Panc1 (cell line): ENCODE measurements at regions of chr10 and their contacts with region 1.

Region 1: GRCh38 chr10:102045292-102045691 is 10.7 kb downstream of the ARMH3 start:
- DNase-seq: no peak
- ATAC-seq: no peak
- H3K4me3 ChIP-seq: no peak overlapping the region
- H3K27ac ChIP-seq: no peak overlapping the region
- H3K4me1 ChIP-seq: no peaks in the 10 kb centered on the region
- H3K27me3 ChIP-seq: no peaks in the 10 kb centered on the region
- CTCF ChIP-seq: no peak

Region 2: DNA sequence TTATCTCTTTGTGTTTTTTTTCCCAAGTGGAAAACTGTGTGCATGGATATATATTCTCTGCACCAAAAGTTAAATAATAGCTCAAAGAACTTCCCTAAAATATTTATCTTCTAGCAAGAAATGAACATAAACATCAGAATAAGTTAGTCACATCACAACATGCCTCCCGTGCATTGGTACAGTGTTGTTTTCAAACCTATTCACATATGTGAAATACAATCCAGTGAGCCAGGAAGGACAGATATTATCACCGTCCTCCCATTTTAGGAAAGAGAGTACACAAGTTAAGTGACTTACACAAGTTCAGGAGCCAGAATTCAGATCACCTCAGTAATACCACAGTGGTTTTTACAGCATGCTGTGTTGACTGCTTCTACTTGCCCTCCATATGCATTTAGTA is 11.5 kb before region 1 on chr10:
- CTCF ChIA-PET with region 1: no interaction called
- POLR2A ChIA-PET with region 1: no interaction called
- in situ Hi-C with region 1: no loop called
- intact Hi-C with region 1: no loop called
- DNase-seq: no peak
- ATAC-seq: no peak
- H3K4me3 ChIP-seq: no peak overlapping the region
- H3K27ac ChIP-seq: no peak overlapping the region
- H3K4me1 ChIP-seq: no peaks in the 10 kb centered on the region
- H3K27me3 ChIP-seq: no peaks in the 10 kb centered on the region
- CTCF ChIP-seq: no peak

Region 3: DNA sequence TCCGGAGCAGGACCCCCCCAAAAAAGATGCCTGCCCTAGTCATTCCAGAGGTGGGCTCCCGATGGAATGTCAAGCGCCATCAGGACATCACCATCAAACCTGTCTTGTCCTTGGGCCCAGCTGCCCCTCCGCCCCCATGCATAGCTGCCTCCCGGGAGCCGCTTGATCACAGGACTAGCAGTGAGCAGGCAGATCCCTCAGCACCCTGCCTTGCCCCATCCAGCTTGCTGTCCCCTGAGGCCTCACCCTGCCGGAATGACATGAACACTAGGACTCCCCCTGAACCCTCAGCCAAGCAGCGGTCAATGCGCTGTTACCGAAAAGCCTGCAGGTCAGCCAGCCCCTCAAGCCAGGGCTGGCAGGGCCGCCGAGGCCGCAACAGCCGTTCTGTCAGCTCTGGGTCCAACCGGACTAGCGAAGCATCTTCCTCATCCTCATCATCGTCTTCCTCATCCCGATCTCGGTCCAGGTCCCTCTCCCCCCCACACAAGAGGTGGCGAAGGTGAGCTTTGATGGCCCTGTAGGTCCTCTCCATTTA is 101.7 kb after region 1 on chr10:
- CTCF ChIA-PET with region 1: no interaction called
- POLR2A ChIA-PET with region 1: interaction called, 15 read pairs
- in situ Hi-C with region 1: no loop called
- intact Hi-C with region 1: no loop called
- DNase-seq: no peak
- ATAC-seq: no peak
- H3K4me3 ChIP-seq: no peak overlapping the region
- H3K27ac ChIP-seq: no peak overlapping the region
- H3K4me1 ChIP-seq: peaks cover 21% of the 10 kb centered on the region
- H3K27me3 ChIP-seq: no peaks in the 10 kb centered on the region
- CTCF ChIP-seq: no peak

Region 4: DNA sequence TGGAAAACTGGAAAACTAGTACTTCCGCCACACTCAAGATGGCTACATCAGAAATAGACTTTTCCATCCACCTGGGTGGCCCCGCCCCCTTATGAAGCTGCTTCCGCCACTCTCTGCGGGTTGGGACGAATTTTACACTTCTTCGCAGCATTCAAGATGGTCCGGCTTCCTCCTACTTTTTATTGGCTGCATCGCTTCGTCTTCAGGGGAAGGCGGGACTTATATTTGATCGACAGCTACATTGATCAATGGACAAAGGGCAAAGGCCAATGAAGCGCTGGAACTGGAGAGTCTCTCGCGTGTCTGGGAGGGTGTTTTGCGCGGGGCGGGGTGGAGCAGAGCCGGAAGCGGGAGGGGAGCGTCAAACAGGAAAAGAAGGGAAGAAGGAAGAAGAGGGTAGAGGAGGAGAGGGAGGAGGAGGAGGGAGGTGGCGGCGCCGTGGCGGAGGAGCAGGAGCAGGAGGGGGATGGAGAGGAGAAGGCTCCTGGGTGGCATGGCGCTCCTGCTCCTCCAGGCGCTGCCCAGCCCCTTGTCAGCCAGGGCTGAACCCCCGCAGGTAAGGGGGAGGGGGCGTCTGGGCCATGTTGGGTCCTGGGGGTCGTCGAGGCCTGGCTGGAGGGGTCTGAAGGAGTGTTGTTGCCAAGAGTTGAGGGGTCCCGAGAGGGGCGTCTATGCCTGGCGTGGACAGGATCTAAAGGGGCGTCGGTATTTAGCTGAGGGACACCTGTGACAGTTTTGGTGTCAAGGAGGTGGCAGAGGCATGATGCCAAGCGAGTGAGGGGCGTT is 698.5 kb after region 1 on chr10 and contains the start of gene WBP1L:
- CTCF ChIA-PET with region 1: no interaction called
- POLR2A ChIA-PET with region 1: no interaction called
- in situ Hi-C with region 1: no loop called
- intact Hi-C with region 1: no loop called
- DNase-seq: peak; percentile 100
- ATAC-seq: peak; percentile 96
- H3K4me3 ChIP-seq: peak within 1 kb of the TSS; percentile 79 to 92
- H3K27ac ChIP-seq: peak within 1 kb of the TSS; percentile 95
- H3K4me1 ChIP-seq: peaks cover 24% of the 10 kb centered on the region
- H3K27me3 ChIP-seq: no peaks in the 10 kb centered on the region
- CTCF ChIP-seq: no peak
- total RNA-seq, gene WBP1L: 91.3 TPM